Right ventricle myocardium inferior (tissue), 1 donor: ENCODE measurements at regions of chr11 and their contacts with region 1.

Region 1: DNA sequence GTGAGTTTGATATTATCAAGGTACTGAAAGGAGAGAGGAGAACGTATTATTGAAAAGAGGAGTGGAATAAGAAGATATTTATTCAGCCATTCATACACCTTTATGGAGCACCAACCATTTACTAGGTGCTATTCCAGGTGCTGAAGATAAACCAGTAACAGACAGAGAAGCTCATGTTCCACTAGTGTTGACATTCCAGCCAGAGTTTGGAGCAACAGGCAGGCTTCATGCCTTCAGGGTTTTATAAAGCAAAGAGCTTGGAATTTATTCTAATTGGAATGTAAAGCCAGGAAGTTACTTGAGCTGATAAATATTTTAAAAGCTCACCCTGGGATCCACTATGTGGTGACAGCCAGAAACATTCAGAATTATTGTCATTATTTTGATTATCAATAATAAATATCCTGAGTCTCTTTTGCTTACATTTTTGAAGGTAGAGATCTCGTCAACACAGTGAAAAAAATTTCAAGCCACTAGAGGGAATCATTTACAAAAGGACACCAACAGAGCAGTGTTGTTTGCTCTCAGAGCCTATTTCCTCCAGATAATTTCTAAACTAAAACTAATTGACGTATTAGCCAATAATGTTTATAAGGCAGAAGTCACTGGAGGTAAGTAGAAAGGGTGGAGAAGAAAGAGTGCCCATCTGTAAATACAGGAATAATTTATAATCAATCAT is 172.0 kb downstream of the KCNA4 start:
- DNase-seq: no peak
- ATAC-seq: no peak

Region 2: DNA sequence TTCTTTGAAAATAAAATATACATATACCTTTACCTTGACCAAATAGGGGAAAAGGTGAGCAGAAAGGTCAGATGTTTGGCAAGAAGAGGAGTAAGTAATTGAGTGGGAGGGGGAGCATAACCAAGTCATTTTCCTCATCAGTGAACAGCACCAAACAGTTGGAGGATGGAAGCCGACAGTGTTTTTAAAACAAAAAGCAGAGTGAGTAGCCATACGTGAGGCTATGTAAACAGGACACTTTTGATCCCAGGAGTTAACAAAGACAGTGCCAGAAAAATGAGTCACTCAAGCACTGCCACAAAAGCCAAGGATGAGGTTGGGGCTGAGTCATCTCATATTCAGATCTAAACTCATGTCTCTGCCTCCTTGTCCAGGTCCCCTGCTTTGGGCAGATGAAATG is 562.8 kb before region 1 on chr11:
- intact Hi-C with region 1: no loop called
- DNase-seq: no peak
- ATAC-seq: no peak

Region 3: DNA sequence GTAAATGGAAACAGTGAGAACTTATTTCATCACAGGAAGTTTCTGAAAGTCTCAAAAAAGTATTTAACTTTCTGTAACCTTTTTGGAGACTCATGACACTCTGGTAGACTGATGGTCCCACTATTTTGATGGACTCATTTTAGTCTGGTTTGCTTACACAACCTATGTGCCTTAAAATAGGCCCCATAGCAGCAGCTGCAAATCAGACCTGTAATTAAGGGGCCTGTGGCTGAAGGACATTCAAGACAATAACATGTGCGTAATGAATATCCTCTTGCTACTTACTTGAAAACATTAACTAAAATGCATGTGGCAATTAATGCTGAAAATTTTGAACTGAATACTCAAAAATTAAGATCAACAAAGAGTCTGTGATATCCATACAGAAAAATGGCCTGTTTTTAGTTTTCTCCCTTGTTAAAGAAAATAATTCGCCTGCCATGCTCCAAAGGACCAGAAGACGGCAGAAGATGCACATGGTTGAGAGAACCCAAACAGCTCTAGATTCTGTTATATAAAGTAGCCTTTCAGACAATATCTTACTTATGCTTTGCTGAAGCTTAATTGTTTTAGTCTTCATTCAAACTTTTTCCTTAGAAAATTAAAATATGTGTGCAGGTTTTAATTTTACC is 396.5 kb before region 1 on chr11:
- intact Hi-C with region 1: loop called (anchors 10 kb)
- DNase-seq: no peak
- ATAC-seq: peak; percentile 57

Region 4: GRCh38 chr11:29956076-29956556 is 111.3 kb after region 1 on chr11:
- intact Hi-C with region 1: no loop called
- DNase-seq: no peak
- ATAC-seq: no peak

Region 5: DNA sequence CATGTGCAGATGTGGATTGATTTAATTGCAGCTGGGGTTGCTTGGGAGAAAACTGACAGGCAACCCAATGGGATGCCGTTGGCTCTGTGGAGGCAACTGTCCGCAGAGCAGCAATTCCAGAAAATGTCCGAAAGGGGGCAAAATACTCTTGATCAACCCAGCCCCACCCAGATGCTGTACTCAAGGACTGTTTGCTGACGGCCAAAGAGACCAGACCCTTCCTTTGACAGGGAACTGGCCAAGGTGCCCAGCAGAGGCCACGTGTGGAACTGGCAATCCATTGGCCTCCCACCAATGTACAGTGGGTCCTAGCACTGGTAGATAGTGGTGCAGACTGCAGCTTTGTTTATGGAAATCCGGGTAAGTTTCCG is 201.7 kb after region 1 on chr11:
- intact Hi-C with region 1: loop called (anchors 5 kb)
- DNase-seq: peak; percentile 44
- ATAC-seq: no peak